Right ventricle myocardium inferior (tissue), 1 donor: ENCODE measurements at regions of chr12 and their contacts with region 1.

Region 1: DNA sequence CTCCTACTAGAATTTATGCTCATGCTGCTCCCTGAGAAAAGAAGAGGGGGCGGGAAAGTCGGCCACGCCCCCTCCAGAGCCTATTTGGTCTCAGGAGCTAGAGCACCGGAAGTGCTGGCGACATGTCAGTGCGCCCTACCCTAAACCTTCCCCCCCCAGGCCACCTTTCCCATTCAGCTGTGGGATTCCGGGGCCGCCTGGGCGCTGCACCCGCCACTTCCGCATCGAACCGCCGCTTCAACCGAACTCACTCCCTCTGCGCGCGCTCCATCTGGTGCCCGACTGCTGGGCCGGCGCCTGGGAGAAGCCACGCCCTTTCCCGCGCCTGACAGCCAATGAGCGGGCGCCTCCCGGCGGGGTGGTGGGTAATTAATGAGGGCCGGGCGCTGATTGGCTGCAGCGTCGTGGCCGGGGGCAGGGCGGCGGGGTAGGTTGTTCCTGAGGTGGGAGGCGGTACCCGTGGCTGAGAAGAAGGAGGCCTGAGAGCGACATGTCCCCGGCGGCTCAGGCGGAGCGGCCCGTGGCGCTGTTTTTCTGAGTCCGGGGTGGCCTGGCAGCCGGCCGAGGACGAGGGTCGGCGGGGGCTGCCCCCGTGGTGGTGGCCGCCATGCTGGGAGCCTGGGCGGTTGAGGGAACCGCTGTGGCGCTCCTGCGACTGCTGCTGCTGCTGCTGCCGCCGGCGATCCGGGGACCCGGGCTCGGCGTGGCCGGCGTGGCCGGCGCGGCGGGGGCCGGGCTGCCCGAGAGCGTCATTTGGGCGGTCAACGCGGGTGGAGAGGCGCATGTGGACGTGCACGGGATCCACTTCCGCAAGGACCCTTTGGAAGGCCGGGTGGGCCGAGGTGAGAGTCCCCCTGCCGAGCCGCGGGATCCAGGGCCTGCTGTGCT is at the start of gene MLEC:
- DNase-seq: peak; percentile 99
- ATAC-seq: peak; percentile 94
- total RNA-seq, gene MLEC: 128 TPM

Region 2: DNA sequence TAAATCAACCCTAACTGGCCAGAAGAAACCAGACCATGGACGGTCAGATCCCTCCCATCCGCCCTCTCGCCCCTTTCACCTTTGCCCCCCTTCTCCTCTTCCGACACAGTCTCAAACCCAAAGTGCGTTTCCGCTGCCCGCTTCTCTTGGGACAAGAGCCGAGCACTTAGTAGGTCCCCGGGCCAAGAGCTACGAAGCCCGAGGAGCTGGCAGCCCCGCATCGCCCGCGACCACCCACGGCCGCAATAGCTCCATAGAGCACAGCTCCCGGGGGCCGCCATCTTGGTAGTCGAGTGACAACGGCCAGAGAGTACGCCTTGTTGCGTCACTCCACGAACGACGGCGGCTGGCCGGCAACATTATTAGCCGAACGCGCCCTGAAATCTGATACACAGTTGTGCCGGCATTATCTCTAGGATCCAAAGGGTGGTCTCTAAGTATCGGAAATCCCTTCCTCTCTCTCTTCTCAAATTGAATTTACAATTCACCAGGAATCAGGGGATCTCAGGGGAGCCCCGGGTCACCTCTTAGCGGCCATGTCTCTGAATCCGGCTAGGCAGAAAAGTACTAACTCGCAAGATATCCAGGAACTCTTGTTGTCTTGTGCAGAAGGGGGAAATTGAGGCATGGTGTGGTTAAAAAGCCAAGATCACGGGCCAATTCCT is 157.9 kb before region 1 on chr12 and contains the start of gene COQ5:
- intact Hi-C with region 1: loop called (anchors 5 kb)
- DNase-seq: peak; percentile 97
- ATAC-seq: peak; percentile 94
- total RNA-seq, gene COQ5: 42.9 TPM

Region 3: DNA sequence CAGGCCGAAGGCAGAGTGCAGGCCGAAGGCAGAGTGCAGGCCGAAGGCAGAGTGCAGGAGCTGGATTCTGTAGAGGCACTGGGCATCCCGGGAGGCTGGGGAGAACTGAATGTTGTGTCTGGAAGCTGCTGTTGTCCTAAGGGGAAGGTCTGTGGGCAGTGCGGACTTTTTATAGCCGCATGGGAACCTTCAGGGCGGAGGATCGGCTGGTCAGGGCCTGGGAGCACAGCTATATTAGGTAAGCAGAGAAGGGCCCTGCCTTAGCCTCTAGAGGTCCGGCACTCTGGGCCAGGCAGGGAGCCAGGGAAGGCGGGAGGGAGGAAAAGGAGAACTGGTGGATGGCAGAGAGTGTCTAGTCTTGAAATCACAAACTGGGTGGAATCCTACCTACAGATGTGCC is 32.3 kb before region 1 on chr12:
- intact Hi-C with region 1: loop called (anchors 2 kb)
- DNase-seq: peak; percentile 82
- ATAC-seq: peak; percentile 89

Region 4: GRCh38 chr12:120710031-120710804 is 23.3 kb after region 1 on chr12 and contains the start of gene UNC119B:
- intact Hi-C with region 1: no loop called
- DNase-seq: peak; percentile 93
- ATAC-seq: peak; percentile 91
- total RNA-seq, gene UNC119B: 14.0 TPM